Ovary (tissue), 10 donors: ENCODE measurements at regions of chr6 and their contacts with region 1.

Region 1: DNA sequence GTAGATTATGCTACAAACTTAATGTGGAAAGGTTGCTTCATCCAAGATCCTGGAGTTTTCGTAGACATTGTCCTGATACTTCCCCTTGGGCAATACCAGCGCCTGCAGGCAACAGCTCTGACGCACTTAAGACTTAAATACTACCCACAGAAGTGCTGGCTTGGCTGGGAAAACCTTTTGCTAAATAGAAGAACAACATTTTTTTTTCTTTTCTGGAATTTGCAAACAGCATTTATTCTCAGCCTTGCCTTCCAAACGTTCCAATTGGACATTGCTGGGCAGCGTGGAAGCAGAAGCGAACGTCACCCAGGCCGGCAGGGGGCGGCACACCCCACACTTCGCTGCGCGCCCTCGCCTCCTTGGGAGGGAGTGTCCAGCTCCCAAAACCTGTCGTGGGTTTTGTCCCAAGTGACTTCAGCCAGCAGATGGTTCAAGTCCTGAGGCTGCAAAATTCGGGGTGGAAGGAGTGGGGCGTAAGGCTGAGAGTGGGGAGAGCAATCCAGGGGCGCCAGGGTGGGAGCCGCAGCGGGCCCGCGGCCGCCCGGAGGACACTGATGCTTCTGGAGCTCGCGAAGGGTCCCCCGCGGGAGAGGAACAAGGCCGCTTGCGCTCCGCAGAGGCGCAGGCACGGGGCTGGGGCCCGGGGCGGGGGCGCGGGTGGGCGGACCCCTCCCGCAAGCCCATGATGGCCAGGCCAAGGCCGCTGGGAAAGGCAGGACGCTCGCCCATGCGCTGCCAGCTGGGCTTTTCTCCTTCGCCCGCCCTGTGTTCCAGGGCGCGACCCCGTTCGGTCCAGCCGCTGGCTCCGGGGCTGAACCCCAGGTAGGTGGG is 60.8 kb upstream of the MAP3K4 start:
- DNase-seq: peak; percentile 77 to 88 (median 84)
- H3K4me3 ChIP-seq: peak overlapping the region; percentile 68
- H3K27ac ChIP-seq: no peak overlapping the region
- H3K4me1 ChIP-seq: peaks cover 2% of the 10 kb centered on the region
- H3K27me3 ChIP-seq: no peaks in the 10 kb centered on the region
- CTCF ChIP-seq: peak; percentile 89 to 92 (median 91)
- EP300 ChIP-seq: no peak
- POLR2A ChIP-seq: peak; percentile 23

Region 2: GRCh38 chr6:160733050-160733646 is 197.6 kb before region 1 on chr6:
- intact Hi-C with region 1: loop called in 1 of 4 experiments (anchors 10 kb)
- DNase-seq: peak; percentile 18 to 39 (median 30)
- H3K4me3 ChIP-seq: no peak overlapping the region
- H3K27ac ChIP-seq: no peak overlapping the region
- H3K4me1 ChIP-seq: no peaks in the 10 kb centered on the region
- H3K27me3 ChIP-seq: no peaks in the 10 kb centered on the region
- CTCF ChIP-seq: peak; percentile 21 to 42 (median 27)
- EP300 ChIP-seq: no peak
- POLR2A ChIP-seq: no peak

Region 3: GRCh38 chr6:160992061-160992979 is 61.6 kb after region 1 on chr6:
- intact Hi-C with region 1: loop called (anchors 1 to 5 kb)
- DNase-seq: peak in 4 of 5 donors; percentile 51 to 65 (median 63)
- H3K4me3 ChIP-seq: peak overlapping the region; percentile 79
- H3K27ac ChIP-seq: peak overlapping the region; percentile 86 to 87
- H3K4me1 ChIP-seq: peaks cover 6% of the 10 kb centered on the region
- H3K27me3 ChIP-seq: no peaks in the 10 kb centered on the region
- CTCF ChIP-seq: peak in 1 of 3 donors; percentile 55
- EP300 ChIP-seq: no peak
- POLR2A ChIP-seq: no peak